ENCODE measurements at regions of chr1 and their contacts with region 1.

Region 1: GRCh38 chr1:19485362-19486187 is at the start of gene CAPZB:
- DNase-seq: peak; percentile 90 to 99 (median 92)

Region 2: DNA sequence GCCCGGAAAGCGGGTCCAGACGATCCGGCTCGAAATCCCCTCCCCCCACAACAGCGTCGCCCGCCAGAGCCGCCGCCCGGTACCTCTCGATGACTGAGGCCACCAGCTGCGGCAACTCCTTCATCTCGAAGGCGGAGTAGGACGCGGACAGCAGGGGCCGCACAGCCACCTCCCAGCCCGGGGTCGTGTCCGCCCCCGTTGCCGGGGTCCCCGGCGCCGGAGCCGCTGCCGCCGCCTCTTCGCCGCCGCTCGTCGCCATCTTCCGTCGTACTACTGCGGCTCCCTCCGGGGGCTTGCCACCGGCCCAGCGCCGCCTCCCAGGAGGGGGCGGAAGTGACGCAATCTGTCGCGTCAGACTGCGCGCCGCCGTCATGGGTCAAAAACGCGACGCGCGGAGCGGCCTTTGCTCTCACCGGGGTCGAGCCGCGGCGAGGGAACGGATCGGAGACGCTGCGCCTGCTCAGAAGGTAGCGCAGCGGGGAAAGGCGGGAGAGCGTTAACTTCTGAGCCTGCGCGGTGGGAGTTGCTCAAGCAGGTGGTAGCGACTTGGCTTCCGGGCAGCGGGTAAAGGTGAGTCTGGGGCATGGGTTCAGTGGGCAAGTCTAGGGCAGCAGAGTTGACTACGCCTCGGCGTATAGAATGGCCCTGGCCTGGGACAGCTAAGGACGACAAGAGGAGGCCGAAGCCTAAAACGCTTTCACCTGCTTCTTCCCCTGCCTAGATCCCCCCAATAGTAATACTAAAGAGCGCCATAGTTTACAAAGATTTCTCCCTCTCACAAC is 275.4 kb before region 1 on chr1 and contains the start of gene UBR4:
- intact Hi-C with region 1: loop called (anchors 5 kb)
- DNase-seq: peak; percentile 89 to 99 (median 92)

Region 3: GRCh38 chr1:19311959-19312781 is 173.4 kb before region 1 on chr1 and contains the starts of genes AKR7A2 and SLC66A1:
- intact Hi-C with region 1: loop called (anchors 10 kb)
- DNase-seq: peak; percentile 84 to 99 (median 93)

Region 4: DNA sequence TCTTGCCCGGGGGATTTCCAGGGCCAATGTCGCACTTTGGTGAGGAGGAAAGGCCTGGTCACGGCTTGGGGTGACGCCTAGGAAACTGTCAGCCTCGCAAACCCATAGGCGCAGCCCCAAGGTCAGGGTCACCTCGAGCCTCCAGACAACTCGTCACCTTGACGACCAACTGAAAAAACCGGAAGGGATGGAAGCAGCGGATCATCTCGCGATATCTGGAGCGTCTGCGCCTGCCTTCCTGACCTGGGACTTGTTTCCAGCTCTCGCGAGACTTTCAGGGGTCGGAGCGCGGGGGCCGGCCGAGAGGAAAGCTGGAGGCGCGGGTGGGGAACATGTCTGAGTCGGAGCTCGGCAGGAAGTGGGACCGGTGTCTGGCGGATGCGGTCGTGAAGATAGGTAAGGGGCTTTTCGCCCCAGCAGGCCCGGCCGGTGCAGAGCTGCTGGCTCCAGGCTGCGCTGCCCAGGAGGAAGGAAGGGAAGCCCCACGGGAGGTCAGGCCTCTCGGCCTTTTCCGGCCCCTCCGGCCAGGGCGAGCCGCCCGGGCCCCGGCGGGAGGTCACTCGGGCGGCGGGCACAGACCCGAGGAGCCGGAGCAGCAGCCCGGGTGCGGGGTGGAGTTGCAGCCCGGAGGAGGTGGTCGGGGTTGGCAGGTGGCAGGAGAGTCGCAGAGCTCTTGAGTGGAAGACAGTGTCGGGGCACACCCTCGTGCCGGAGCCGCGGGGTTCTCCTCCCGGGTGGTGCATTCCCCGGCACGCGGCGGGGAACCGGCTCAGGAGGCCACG is 111.3 kb after region 1 on chr1:
- intact Hi-C with region 1: loop called (anchors 5 kb)
- DNase-seq: peak; percentile 88 to 99 (median 96)

Region 5: DNA sequence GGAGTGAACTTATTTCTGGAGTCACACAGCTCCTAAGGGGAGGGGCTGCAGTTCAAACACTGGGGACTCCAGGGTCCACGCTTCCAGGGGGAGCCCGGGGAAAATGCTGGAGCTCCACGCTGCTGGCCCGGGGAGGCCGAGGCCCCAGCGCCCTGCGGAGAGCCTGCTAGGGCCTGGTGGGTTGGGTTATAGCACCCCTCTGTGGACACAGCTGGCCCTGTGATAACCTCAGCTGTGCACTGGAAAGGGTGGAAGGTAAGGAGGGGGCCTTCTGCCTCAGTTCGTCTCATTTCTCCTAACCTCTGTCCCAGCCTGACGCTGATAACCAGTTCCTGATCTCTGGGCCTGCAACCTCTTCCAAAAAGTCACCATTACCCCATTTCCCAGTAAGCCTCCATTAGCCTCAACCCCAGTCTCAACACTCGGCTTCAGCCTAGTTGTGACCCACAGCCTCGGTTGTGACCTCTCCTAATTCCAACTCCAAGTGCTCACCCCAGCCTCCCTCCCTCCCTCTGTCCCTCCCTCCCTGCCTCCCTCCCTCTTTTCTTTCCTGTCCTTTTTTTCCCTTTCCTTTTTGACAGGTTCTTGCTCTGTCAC is 165.7 kb after region 1 on chr1:
- intact Hi-C with region 1: loop called (anchors 5 kb)
- DNase-seq: peak in 7 of 10 donors; percentile 6 to 93 (median 60)

Region 6: DNA sequence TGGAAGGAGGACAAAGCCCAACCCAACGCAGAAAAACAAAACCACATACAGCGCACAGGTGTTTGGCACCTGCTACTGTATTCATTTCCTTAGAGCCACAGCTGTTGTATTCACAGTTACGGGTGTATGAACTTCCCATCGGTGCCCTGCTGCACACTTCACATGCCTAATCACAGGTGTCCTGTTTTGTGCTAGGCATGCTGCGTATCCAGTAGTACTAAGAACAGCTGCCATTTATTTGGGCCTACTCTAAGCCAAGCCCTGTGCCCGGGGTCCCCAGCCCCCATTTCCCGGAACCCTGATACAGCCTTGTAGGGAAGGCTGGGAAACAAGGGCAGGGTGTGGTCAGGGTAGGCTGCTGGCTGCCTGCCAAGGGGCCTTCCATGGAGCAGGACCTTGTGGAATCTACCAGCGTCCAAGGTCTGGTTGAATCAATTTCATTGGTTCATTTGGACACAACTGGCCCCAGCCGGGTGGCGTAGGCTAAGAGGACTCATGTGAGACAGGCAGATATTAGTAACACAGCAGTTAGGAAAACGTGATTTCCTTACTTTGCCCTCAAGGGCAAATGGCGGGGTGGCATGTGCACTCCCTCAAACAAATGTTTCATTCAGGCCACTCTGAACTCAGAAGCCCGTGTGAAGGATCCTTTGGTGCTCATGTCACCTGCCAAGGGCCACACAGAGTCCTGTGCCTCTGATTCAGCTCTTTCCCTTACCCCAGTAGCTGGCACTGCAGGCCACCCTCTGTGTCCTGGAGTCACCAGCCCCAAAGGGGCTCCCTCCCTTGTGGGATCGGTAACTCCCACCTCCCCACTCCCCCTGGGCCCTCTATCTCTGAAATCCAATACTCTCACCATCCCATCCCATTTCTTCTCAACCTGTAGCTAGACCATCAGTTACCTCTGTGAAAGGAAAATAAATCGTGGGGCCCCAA is 330.5 kb after region 1 on chr1:
- intact Hi-C with region 1: no loop called
- DNase-seq: peak in 1 of 10 donors; percentile 77

Region 7: DNA sequence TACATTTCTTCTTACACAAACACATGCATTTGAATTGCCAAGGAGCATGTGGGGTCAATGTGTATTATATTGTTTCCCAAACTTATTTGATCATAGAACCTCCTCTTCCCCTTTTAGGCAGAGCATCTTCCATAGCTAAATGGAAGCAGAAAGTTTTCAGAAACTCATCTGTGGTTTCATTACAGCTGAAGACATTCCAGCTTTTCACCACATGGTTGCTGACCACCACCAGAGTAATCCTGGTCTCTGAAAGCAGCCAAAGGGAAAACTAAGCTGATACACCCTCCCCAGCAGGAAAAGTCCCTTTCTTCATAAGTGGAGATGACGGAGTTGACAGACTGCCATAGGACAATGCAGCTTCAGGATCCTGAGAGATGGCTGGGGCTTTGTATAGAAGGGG is 366.5 kb after region 1 on chr1:
- intact Hi-C with region 1: no loop called
- DNase-seq: no peak